Activated T-helper 2 cell treated with anti-CD3 and anti-CD28 coated beads, Interferon-gamma antibody, Interleukin-2, Interleukin-4, amounts not matched to agents 10 μg/mL and 5 μg/mL and 100 μg/mL, durations not matched to agents 14 hours and 24 hours and 36 hours (primary cell): ENCODE measurements at regions of chr7 and their contacts with region 1.

Region 1: GRCh38 chr7:135170274-135170997 is at the start of gene CYREN:
- DNase-seq: peak; percentile 82
- H3K4me3 Mint-ChIP-seq: peak within 1 kb of the TSS; percentile 95
- H3K27ac Mint-ChIP-seq: peak within 1 kb of the TSS; percentile 95
- H3K4me1 Mint-ChIP-seq: peaks cover 33% of the 10 kb centered on the region
- H3K27me3 Mint-ChIP-seq: no peaks in the 10 kb centered on the region
- total RNA-seq, gene CYREN: 50.1 and 52.9 TPM in 2 replicates

Region 2: GRCh38 chr7:134432296-134433152 is 737.9 kb before region 1 on chr7:
- intact Hi-C with region 1: loop called (anchors 10 kb)
- DNase-seq: peak; percentile 71
- H3K4me3 Mint-ChIP-seq: peak overlapping the region; percentile 80
- H3K27ac Mint-ChIP-seq: peak overlapping the region; percentile 85
- H3K4me1 Mint-ChIP-seq: peaks cover 15% of the 10 kb centered on the region
- H3K27me3 Mint-ChIP-seq: peaks cover 8% of the 10 kb centered on the region

Region 3: DNA sequence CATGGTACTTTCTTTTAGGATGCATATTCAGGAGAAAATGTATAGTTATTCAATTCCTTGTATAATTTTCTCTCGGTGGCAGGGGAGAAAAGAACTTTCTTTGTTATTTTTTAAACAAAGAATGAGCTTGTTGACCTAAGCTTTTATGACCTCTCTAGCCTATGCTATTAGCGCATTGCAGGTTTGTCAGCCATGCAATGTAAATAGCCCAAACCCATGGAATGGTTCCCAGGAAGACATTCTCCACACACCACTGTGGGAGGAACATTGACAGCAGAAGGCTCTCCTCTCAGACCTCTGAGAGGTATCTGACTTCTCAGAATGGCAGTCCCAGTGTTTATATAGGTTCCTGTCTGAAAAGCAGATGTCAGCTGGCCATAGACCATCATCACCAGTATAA is 203.8 kb before region 1 on chr7:
- intact Hi-C with region 1: no loop called
- DNase-seq: no peak
- H3K4me3 Mint-ChIP-seq: no peak overlapping the region
- H3K27ac Mint-ChIP-seq: no peak overlapping the region
- H3K4me1 Mint-ChIP-seq: peaks cover 1% of the 10 kb centered on the region
- H3K27me3 Mint-ChIP-seq: peaks cover 3% of the 10 kb centered on the region

Region 4: DNA sequence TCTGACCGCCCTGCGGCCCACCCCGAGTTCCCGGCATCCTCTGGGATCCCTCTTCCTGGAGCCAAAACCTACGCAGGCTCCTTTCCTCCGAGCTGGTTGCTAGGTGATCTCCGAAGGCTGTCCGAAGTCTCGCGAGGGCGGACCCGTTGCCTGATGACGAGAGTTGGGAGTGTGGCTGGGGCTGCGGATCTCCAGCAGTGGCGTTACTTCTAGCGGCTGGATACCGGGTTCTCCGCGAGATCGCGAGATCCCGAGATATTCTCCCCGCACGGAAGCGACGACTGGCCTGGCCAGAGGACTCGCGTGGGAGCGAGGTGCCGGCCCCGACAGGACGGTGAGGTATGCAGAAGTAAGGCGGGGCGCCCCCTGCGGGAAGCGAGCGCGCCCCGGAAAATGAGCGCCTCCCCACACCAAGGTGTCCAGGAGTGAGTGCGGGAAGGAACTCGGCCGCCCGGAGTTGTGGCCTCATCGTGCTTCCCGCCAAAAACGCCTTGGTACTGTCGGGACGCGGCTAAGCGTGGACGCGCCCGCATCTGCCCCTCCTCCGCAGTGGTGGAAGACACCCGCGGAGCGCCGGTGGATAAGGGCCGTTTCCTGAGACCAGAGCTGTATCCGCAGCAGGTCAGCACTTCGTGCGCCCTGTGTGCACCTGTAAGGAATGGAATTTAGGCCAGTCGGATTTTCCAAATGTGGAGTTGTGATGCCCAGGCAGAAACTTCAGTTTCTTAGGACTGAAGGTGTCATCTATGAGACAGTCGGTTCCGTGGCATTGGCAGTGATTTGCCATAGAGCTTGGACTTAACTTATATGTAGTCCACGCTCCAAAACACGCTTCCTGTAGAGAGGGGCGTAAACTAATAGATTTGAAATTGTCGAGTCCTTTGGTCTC is 183.8 kb before region 1 on chr7 and contains the start of gene AGBL3:
- intact Hi-C with region 1: loop called (anchors 1 kb)
- DNase-seq: peak; percentile 85
- H3K4me3 Mint-ChIP-seq: peak within 1 kb of the TSS; percentile 95
- H3K27ac Mint-ChIP-seq: peak within 1 kb of the TSS; percentile 94
- H3K4me1 Mint-ChIP-seq: peaks cover 33% of the 10 kb centered on the region
- H3K27me3 Mint-ChIP-seq: no peaks in the 10 kb centered on the region
- total RNA-seq, gene AGBL3: 1.6 and 3.9 TPM in 2 replicates

Region 5: GRCh38 chr7:135160098-135160857 is 10.2 kb before region 1 on chr7:
- intact Hi-C with region 1: no loop called
- DNase-seq: no peak
- H3K4me3 Mint-ChIP-seq: no peak overlapping the region
- H3K27ac Mint-ChIP-seq: peak overlapping the region; percentile 76
- H3K4me1 Mint-ChIP-seq: peaks cover 22% of the 10 kb centered on the region
- H3K27me3 Mint-ChIP-seq: no peaks in the 10 kb centered on the region

Region 6: DNA sequence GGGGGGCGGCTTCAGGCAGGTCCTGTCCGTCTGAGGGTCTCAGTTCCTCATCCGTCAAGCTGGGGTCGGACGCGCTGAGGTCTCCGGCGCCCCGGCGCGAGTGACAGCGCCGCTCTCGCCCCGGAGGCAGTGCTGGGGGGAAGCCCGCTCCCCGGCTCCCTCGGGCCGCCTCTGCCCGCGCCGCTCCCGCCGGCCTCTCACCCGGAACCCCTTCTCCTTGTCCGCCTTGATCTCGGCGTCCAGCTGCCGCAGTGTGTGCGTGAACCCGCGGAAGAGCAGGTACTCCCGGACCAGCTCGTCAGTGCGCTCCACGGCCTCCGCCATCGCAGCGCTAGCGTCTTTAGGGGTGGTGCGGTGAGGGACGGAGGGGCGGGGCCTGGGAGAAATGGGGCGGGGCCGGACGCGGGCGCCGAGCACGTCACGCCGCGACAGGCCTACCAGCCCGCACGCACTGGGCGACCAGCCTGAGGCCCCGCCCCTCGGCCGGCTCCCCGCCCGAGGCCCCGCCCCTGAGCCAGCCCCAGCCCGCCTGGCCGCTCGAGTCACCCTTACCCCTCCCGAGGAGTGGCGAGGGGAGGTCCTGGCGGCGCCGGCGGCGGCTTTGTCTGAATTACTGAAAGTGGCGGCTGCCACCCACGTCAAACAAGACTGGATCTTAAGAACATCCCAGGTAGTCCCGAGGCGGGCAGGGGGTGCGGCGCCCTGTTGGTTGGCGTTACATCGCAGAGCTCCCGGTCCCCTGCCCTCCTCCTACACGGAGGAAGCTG is 40.9 kb after region 1 on chr7 and contains the start of gene WDR91:
- intact Hi-C with region 1: loop called (anchors 2 kb)
- DNase-seq: peak; percentile 86
- H3K4me3 Mint-ChIP-seq: peak within 1 kb of the TSS; percentile 95
- H3K27ac Mint-ChIP-seq: peak within 1 kb of the TSS; percentile 96
- H3K4me1 Mint-ChIP-seq: peaks cover 32% of the 10 kb centered on the region
- H3K27me3 Mint-ChIP-seq: no peaks in the 10 kb centered on the region
- total RNA-seq, gene WDR91: 19.2 and 22.6 TPM in 2 replicates

Region 7: GRCh38 chr7:135270577-135271254 is 100.3 kb after region 1 on chr7:
- intact Hi-C with region 1: no loop called
- DNase-seq: no peak
- H3K4me3 Mint-ChIP-seq: no peak overlapping the region
- H3K27ac Mint-ChIP-seq: no peak overlapping the region
- H3K4me1 Mint-ChIP-seq: peaks cover 2% of the 10 kb centered on the region
- H3K27me3 Mint-ChIP-seq: peaks cover 8% of the 10 kb centered on the region

Region 8: DNA sequence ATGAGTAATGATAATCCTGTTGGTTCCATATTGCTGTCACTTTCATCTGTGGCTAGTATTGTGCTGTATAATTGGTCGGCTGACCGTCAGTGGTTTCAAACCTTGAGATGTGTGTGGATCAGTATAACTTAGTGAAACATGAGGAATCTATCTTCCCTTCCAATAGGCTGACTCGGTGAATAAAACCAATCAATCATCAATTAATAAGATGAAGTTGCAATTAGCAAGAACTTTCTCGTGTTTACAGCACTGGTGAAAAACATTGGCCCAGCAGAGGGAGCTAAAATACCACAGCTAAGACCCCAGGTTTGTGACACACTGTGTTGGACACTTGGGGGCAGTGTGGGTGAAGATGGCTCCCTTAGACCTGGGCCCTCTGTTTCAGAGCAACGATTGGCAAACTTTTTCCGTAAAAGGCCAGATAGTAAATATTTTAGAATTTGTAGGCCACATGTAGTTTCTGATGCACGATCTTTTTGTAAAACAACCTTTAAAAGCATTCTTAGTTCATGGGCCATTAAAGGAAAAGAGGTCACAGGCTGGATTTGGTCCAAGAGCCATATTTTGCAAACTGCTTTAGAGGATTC is 111.0 kb after region 1 on chr7:
- intact Hi-C with region 1: no loop called
- DNase-seq: peak; percentile 67
- H3K4me3 Mint-ChIP-seq: no peak overlapping the region
- H3K27ac Mint-ChIP-seq: no peak overlapping the region
- H3K4me1 Mint-ChIP-seq: peaks cover 15% of the 10 kb centered on the region
- H3K27me3 Mint-ChIP-seq: peaks cover 10% of the 10 kb centered on the region

Region 9: DNA sequence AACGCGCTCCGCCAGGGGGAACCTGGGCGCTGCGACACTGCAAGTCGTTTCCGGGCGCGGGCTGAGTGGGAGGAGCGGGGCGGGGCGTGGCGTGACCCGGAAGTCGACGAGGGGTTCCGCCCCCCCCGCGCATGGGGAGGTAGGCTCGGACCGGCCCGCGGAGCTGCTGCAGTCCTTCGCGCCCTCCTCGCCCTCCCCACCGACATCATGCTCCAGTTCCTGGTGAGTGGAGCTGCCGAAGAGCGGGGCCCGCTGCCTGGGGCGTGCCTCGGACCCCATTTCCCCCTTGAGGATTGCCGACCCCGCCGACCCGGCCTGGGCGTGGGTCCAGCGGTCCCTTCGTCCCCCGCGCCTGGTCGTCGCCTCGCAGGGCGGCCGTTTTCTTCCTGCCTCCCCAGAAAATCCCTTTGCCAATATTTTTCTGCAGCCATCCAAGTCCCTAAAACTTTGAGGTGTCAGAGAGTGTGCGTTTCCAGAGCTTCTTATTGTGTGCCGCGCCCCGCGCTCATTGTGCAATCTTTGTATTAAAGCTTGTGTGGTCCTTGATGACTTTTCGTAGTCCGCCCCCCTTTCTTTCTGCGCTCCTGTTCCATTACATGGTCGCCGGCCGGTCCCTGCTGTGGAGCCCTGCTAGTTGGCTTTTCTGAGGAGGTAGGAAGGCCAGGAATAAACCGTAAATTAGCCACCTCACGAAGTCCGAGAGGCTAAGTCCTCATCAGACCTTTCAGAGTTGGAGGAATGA is 492.1 kb after region 1 on chr7 and contains the start of gene STMP1:
- intact Hi-C with region 1: loop called (anchors 5 kb)
- DNase-seq: peak; percentile 92
- H3K4me3 Mint-ChIP-seq: peak within 1 kb of the TSS; percentile 95
- H3K27ac Mint-ChIP-seq: peak within 1 kb of the TSS; percentile 91
- H3K4me1 Mint-ChIP-seq: peaks cover 28% of the 10 kb centered on the region
- H3K27me3 Mint-ChIP-seq: no peaks in the 10 kb centered on the region
- total RNA-seq, gene STMP1: 24.3 and 25.1 TPM in 2 replicates